HAP-1 (cell line): ENCODE measurements at regions of chr6 and their contacts with region 1.

Region 1: GRCh38 chr6:13336553-13336952 is 8.2 kb upstream of the TBC1D7 start:
- DNase-seq: peak; percentile 81 to 92
- H3K4me3 ChIP-seq: no peak overlapping the region
- H3K4me1 ChIP-seq: peaks cover 2% of the 10 kb centered on the region
- H3K27me3 ChIP-seq: no peaks in the 10 kb centered on the region

Region 2: GRCh38 chr6:12653486-12653885 is 683.1 kb before region 1 on chr6:
- in situ Hi-C with region 1: no loop called
- DNase-seq: no peak
- H3K4me3 ChIP-seq: no peak overlapping the region
- H3K4me1 ChIP-seq: no peaks in the 10 kb centered on the region
- H3K27me3 ChIP-seq: no peaks in the 10 kb centered on the region

Region 3: GRCh38 chr6:13163161-13163944 is 173.2 kb before region 1 on chr6:
- in situ Hi-C with region 1: no loop called
- DNase-seq: no peak
- H3K4me3 ChIP-seq: no peak overlapping the region
- H3K4me1 ChIP-seq: no peaks in the 10 kb centered on the region
- H3K27me3 ChIP-seq: no peaks in the 10 kb centered on the region

Region 4: GRCh38 chr6:13487122-13488014 is 150.8 kb after region 1 on chr6 and contains the start of gene GFOD1:
- in situ Hi-C with region 1: loop called (anchors 10 kb)
- DNase-seq: peak; percentile 86 to 90
- H3K4me3 ChIP-seq: peak within 1 kb of the TSS; percentile 54
- H3K4me1 ChIP-seq: peaks cover 11% of the 10 kb centered on the region
- H3K27me3 ChIP-seq: no peaks in the 10 kb centered on the region